ENCODE measurements at regions of chr9 and their contacts with region 1.

Region 1: DNA sequence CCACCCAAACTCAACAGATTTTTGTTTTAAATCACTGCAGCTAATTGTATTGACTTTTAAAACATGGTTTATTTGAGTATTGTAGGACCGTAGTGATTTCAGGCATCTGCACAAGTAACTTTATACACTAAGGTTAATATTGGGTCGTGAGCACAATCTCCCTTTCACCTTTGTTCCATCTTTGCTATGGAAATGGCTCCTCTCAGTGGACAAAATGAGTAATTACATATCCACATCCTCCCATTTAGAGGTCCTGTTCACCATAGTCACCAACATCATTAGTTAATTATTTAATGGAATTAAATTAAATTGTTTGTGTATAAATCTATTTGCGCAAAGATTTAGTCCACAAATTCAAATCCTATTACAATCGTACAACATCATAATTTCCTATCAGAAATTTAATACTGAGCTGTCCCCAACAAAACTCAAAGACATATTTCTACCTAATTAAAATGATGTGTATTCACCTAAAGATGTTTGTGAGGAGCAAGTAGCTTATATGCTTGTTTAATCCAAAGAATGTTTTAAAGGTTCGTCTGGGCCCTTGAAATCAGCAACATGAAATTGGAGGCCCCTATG is 173.0 kb upstream of the DAPK1 start:
- DNase-seq: peak; percentile 46
- H3K4me3 ChIP-seq: no peak overlapping the region
- H3K27ac ChIP-seq: no peak overlapping the region
- H3K4me1 ChIP-seq: no peaks in the 10 kb centered on the region
- CTCF ChIP-seq: peak; percentile 88

Region 2: DNA sequence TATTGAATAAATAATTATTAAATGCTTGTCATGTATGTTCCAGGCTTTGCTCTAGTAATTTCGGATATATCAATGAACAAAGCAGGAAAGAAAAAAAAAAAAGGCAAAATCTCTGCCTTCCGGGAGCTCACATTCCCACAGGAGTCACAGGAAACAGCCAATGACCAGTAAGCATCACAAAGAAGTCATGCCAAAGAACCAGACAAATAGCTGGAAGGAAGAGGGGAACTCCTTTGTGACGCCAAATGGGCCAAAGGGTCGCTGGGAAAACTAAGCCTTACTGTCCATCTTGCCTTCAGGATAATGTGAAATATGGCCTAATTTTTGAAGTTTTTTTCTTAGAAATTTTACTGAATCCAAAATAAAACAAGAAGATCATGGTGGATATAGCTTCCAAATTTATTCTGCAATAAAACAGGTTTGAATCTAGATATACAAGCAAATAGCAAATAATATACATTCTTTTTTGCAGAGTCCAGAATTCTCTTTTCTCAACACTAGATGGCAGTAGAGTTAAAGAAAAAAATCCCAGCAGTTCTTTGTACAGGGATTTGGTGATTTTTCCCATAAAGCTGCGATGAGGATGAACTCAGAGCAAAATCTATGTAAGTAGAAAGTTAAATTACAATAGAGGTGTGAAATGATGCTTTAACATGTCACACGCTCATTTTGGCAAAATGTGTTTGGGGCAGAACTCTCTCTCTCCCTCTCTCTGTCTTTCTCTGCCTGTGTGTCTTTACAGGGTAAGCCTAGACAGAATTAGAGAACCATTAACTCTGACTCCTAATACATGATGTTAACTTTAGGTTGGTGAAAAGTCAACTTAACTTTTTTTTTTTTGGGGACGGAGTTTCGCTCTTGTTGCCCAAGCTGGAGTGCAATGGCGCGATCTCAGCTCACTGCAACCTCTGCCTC is 910.5 kb before region 1 on chr9:
- CTCF ChIA-PET with region 1: no interaction called
- POLR2A ChIA-PET with region 1: no interaction called
- intact Hi-C with region 1: loop called (anchors 1 kb)
- DNase-seq: peak; percentile 27
- H3K4me3 ChIP-seq: no peak overlapping the region
- H3K27ac ChIP-seq: no peak overlapping the region
- H3K4me1 ChIP-seq: no peaks in the 10 kb centered on the region
- CTCF ChIP-seq: peak; percentile 93

Region 3: GRCh38 chr9:86434039-86434726 is 890.5 kb before region 1 on chr9:
- CTCF ChIA-PET with region 1: no interaction called
- POLR2A ChIA-PET with region 1: no interaction called
- intact Hi-C with region 1: loop called (anchors 5 kb)
- DNase-seq: peak; percentile 48
- H3K4me3 ChIP-seq: no peak overlapping the region
- H3K27ac ChIP-seq: no peak overlapping the region
- H3K4me1 ChIP-seq: no peaks in the 10 kb centered on the region
- CTCF ChIP-seq: peak; percentile 91

Region 4: GRCh38 chr9:86486891-86487837 is 837.5 kb before region 1 on chr9:
- CTCF ChIA-PET with region 1: no interaction called
- POLR2A ChIA-PET with region 1: no interaction called
- intact Hi-C with region 1: loop called (anchors 10 kb)
- DNase-seq: peak; percentile 43
- H3K4me3 ChIP-seq: no peak overlapping the region
- H3K27ac ChIP-seq: no peak overlapping the region
- H3K4me1 ChIP-seq: no peaks in the 10 kb centered on the region
- CTCF ChIP-seq: peak; percentile 77

Region 5: DNA sequence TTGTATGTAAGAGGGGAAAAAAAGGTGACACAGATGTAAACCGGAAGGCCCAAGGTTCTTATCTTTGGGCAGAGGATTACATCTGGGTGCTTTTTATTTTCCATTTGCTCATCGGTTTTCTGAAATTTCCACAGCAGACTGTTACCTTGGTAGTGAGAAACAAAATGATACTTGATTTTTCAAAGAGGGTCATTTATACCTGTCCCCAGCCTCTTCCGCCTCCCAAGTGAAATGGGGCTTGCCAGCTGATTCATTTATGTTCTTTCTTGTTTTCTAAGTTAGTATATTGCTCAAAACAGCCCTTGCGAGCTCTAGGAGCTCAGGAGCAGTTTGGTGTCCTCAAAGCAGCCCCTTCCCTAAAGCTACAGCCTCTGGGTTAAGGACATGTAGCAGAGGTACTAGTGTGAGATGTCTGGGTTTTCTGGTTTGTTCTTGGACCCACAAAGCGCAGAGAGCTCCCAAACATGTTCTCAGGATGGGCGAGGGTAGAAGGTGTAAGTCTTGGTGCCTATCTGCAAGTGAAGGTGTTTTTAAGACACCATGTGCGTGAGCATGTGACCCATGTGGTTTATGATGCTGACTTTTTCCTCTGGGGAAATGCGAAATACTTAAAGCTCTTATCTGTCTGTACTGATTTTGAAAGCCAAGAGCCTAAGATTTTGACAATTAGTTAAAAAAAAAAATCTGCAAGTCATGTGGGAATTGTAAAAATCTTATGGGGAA is 211.3 kb after region 1 on chr9:
- CTCF ChIA-PET with region 1: no interaction called
- POLR2A ChIA-PET with region 1: no interaction called
- intact Hi-C with region 1: no loop called
- DNase-seq: peak; percentile 35
- H3K4me3 ChIP-seq: no peak overlapping the region
- H3K27ac ChIP-seq: peak overlapping the region; percentile 20
- H3K4me1 ChIP-seq: peaks cover 20% of the 10 kb centered on the region
- CTCF ChIP-seq: no peak